HAP-1 (cell line): ENCODE measurements at regions of chr2 and their contacts with region 1.

Region 1: DNA sequence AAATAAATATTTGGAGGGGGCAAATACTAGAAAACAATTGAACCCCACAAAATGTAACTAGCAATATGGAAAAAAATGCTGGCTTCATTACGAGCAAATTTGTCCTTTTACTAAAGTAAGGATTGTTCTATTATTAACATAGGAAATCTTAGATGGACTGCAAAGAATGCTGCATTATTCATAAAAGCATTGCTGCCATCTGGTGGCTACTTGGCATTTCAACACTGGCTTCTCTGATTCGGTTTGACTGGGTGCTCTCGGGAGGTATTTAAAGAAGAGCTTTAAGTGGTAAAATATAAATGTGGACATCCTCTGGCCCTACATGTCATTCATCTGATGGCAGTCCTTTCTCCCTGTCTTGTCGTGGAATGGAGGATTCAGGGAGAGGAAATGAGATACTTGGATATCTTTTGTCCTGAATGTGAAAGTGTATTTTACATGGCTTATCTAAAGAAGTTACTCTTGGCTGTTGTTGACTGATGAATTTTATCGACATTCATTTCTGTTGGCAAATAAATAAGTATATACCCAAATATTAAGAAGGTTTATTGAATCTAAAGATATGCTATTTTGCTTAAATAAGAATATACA is 130.2 kb downstream of the ARHGAP15 start:
- DNase-seq: peak; percentile 66 to 73
- H3K4me3 ChIP-seq: no peak overlapping the region
- H3K4me1 ChIP-seq: no peaks in the 10 kb centered on the region
- H3K27me3 ChIP-seq: peaks cover 15% of the 10 kb centered on the region

Region 2: GRCh38 chr2:143110758-143111428 is 148.6 kb before region 1 on chr2:
- in situ Hi-C with region 1: loop called (anchors 25 kb)
- DNase-seq: peak; percentile 44 to 69
- H3K4me3 ChIP-seq: no peak overlapping the region
- H3K4me1 ChIP-seq: peaks cover 2% of the 10 kb centered on the region; the same call in 1 of the 2 replicates
- H3K27me3 ChIP-seq: peaks cover 18% of the 10 kb centered on the region